Prostate gland (tissue), 2 donors: ENCODE measurements at regions of chr16 and their contacts with region 1.

Region 1: DNA sequence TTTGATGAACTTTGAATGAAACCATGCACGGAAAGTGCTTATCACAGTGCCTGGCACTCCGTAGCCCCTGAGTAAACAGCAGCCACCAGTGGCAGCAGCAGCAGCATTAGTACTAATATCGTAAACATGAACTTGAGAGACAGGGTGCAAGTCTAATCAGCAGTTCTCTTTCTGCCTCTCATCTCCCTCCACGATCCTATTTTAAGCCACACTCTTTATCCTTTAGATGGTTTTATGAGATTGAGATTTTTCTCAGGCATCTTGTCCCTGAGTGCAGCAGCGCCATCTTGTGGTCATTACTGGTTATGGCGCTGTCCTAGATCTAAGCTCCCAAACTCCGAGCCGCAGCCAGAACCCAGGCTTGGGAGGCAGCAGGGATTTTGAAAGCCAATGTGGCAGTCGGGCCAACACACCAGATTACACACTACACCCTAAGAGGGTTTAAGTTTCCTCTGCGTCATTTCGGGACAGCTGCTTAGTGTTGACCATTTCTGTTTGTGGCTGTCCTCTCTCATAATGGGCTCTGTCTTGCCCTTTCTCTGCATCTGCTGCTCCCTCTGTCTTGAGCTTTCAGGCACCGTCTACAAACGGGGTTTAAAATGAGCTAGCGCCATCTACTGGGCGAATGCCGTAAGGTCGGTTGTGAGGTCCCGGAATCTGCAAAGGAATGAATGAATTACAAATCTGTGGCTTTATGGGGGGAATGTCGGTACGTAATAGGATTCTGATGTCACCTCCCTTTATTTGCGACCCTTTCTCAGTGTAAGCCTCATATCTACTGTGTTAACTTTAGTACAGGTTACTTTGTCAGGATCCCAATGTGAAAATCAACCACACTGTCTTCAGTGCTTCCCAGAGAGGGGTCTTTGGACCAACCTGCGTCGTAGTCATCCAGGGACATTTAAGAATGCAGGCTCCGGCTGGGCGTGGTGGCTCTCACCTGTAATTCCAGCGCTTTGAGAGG is 64.5 kb downstream of the CYLD start:
- DNase-seq: peak; percentile 86
- H3K4me3 ChIP-seq: peak overlapping the region in 1 of 2 donors; percentile 23
- H3K27ac ChIP-seq: peak overlapping the region in 1 of 2 donors; percentile 58
- H3K4me1 ChIP-seq: no peaks in the 10 kb centered on the region
- H3K27me3 ChIP-seq: no peaks in the 10 kb centered on the region
- CTCF ChIP-seq: peak; percentile 76 to 95 (median 86)
- POLR2A ChIP-seq: no peak

Region 2: DNA sequence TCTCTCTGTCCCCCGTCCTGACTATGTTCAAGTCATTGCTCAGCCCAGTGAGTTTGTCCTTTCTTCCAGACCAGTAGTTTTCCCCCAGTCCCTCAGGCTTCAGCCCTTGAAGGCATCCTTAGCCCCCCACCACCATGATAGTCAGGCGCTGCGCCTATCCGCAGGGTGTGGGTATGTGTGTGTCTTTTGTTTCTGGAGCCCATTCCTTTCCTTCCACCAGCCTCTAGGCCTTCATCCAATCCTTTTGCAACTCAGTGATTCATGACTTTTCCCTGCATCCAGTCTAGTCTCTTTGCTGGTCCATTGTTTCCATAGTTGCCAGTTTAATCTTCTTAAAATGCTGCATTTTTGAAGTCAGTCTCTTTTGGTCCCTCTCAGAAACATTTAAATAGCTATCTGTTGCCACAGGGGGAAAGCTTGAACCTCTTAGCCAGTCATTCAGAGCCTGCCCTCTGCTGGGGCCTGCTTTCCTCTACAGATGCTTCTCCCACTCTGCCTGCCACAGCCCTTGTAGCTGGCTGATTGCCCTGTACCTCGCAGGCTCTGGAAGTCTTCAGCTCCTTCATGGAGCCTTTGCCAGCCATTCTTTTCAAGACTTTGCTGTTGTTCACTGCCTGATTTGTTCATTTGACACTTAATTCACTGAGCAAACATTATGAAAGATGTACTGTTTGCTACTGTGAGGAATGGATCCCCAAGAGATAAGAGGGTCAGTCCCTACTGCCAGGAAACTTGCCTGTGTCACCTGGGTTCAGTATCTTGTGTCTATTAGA is 595.9 kb before region 1 on chr16:
- intact Hi-C with region 1: loop called (anchors 5 kb)
- DNase-seq: peak; percentile 85
- H3K4me3 ChIP-seq: no peak overlapping the region
- H3K27ac ChIP-seq: no peak overlapping the region
- H3K4me1 ChIP-seq: peaks cover 3% of the 10 kb centered on the region
- H3K27me3 ChIP-seq: no peaks in the 10 kb centered on the region
- CTCF ChIP-seq: peak; percentile 20 to 76 (median 60)
- POLR2A ChIP-seq: no peak

Region 3: GRCh38 chr16:50377001-50377400 is 429.4 kb before region 1 on chr16:
- intact Hi-C with region 1: loop called (anchors 5 kb)
- DNase-seq: no peak
- H3K4me3 ChIP-seq: no peak overlapping the region
- H3K27ac ChIP-seq: no peak overlapping the region
- H3K4me1 ChIP-seq: no peaks in the 10 kb centered on the region
- H3K27me3 ChIP-seq: no peaks in the 10 kb centered on the region
- CTCF ChIP-seq: no peak
- POLR2A ChIP-seq: no peak

Region 4: GRCh38 chr16:50548125-50548908 is 258.1 kb before region 1 on chr16 and contains the start of gene NKD1:
- intact Hi-C with region 1: loop called (anchors 10 kb)
- DNase-seq: peak; percentile 68
- H3K4me3 ChIP-seq: peak within 1 kb of the TSS; percentile 63 to 77
- H3K27ac ChIP-seq: peak within 1 kb of the TSS; percentile 41 to 72
- H3K4me1 ChIP-seq: no peaks in the 10 kb centered on the region
- H3K27me3 ChIP-seq: no peaks in the 10 kb centered on the region
- CTCF ChIP-seq: peak in 1 of 4 experiments; percentile 2
- POLR2A ChIP-seq: no peak
- total RNA-seq, gene NKD1: 7.0 to 13.8 TPM

Region 5: DNA sequence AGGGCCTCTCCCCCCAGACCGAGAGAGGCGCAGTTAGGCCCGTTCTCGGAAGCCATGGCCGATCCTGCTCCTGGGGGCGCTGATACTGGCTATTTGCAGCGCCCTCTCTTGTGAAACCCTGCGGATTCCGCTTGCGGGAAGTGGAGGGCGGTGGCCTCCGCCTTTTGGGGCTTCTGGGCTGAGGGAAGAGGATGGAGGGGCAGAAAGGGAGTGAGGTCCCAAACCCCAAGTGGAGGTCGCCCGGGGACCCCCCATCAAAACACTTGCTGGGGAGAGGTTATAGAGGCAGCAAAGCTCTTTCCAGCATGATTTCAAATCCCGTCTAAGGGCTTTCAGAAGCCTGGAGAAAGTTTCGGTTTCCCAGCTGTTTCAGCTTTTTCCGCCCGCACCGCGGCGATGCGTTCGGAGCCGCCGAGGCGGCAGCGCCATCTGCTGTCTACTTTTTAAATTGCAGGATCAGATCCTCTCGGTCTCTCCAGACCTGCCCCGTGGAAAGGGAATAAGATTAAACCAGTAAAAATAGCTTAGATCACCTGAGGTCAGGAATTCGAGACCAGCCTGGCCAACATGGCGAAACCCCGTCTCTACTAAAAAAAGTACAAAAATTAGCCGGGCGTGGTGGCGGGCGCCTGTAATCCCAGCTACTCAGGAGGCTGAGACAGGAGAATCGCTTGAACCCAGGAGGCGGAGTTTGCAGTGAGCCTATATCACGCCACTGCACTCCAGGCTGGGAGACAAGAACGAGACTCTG is 141.1 kb before region 1 on chr16:
- intact Hi-C with region 1: loop called (anchors 2 kb)
- DNase-seq: peak; percentile 66
- H3K4me3 ChIP-seq: peak overlapping the region; percentile 21
- H3K27ac ChIP-seq: no peak overlapping the region
- H3K4me1 ChIP-seq: no peaks in the 10 kb centered on the region
- H3K27me3 ChIP-seq: no peaks in the 10 kb centered on the region
- CTCF ChIP-seq: peak; percentile 87 to 93 (median 88)
- POLR2A ChIP-seq: no peak

Region 6: DNA sequence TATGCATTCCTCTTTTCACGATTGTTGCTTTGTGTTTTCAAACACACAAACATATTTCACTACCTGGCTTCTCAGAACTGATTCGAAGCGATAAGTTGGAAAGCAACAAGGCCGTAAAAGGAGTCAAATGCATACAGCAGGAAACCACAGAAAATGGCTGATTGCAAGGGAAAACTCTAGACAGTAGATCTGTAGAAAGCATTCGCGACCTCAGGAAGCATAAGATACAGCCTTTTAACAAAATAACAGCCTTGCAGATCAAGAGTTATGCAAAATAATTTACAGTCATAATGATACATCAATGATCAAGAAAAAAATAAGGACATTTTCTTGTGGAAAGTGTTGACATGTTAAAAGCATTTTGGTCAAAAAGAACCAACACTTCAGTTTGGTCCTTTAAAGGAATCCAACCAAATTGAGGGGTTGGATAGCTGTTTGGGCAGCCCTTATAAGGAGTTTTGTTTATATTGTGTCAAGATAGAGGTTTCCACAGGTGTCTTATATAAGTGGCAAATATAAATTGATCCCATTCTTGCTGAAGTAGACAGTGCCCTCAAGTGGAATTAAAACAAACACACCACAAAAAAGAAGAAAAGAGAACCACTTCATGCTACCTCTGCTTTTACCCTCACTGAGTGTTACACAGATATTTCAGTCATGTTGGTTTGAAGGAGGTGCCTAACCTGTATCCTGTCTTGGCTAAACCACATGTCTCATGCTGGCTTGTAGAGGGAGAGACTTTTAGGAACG is 59.0 kb before region 1 on chr16:
- intact Hi-C with region 1: loop called (anchors 5 kb)
- DNase-seq: no peak
- H3K4me3 ChIP-seq: no peak overlapping the region
- H3K27ac ChIP-seq: no peak overlapping the region
- H3K4me1 ChIP-seq: no peaks in the 10 kb centered on the region
- H3K27me3 ChIP-seq: no peaks in the 10 kb centered on the region
- CTCF ChIP-seq: peak in 2 of 4 experiments; percentile 47 to 52
- POLR2A ChIP-seq: no peak

Region 7: GRCh38 chr16:50974438-50975036 is 168.2 kb after region 1 on chr16:
- intact Hi-C with region 1: no loop called
- DNase-seq: no peak
- H3K4me3 ChIP-seq: no peak overlapping the region
- H3K27ac ChIP-seq: no peak overlapping the region
- H3K4me1 ChIP-seq: no peaks in the 10 kb centered on the region
- H3K27me3 ChIP-seq: no peaks in the 10 kb centered on the region
- CTCF ChIP-seq: no peak
- POLR2A ChIP-seq: no peak